Vagina (tissue), 2 donors: ENCODE measurements at regions of chr20 and their contacts with region 1.

Region 1: DNA sequence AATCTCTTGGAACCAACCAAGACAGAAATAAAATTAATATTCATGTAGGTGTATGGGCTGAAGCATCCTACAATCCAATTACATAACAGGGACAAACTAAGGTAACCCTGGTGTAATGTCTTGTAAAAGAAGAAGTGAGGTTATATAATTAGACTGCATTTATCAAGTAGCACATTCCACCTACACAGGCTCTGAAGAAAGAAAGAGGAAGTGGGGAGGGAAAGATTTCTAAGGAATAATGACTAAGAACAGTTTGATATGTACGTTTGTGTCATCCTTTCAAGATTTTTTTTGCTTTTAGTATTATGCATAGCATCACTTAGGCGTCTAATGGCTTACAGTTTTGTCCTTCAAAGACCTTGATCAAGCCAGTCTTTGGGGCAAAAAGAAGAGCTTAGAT is 139.7 kb downstream of the PLCB1 start:
- DNase-seq: no peak
- H3K4me3 ChIP-seq: no peak overlapping the region
- H3K27ac ChIP-seq: no peak overlapping the region
- H3K4me1 ChIP-seq: no peaks in the 10 kb centered on the region
- H3K27me3 ChIP-seq: no peaks in the 10 kb centered on the region
- CTCF ChIP-seq: no peak
- POLR2A ChIP-seq: no peak

Region 2: DNA sequence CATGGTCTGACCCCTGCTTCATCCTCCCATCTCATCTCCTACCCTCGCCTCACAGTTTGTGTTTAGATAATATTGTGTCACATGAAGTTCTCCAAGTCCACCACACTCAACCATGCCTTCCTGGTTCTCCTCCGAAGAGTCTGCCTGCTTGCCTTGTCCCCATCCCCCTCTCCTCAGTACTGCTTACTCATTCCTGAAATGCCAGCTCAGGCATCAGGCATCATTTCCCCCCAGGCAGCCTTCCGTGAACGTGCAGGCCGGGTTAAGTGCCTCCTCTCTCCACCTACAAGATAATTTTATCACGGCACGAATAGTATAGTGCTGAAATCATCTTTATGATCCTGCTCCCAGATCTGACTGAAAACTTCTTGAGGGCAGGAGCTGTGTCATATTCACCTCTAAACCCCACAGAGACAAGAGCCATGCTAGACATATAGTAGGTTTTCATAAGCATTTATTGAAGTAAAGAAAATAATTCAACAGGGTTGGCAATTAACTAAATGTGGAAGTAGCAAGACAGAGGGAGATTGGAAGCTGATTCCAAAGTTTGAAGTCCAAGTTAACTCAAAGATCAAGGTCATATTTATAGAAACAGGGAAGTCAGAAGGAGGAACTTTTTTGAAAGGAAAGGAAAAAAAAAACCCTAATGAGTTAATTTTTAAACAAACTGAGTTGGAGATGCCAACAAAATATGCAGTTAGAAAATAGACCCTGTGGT is 1552.9 kb before region 1 on chr20:
- intact Hi-C with region 1: no loop called
- DNase-seq: no peak
- H3K4me3 ChIP-seq: no peak overlapping the region
- H3K27ac ChIP-seq: no peak overlapping the region
- H3K4me1 ChIP-seq: no peaks in the 10 kb centered on the region
- H3K27me3 ChIP-seq: no peaks in the 10 kb centered on the region
- CTCF ChIP-seq: no peak
- POLR2A ChIP-seq: no peak

Region 3: DNA sequence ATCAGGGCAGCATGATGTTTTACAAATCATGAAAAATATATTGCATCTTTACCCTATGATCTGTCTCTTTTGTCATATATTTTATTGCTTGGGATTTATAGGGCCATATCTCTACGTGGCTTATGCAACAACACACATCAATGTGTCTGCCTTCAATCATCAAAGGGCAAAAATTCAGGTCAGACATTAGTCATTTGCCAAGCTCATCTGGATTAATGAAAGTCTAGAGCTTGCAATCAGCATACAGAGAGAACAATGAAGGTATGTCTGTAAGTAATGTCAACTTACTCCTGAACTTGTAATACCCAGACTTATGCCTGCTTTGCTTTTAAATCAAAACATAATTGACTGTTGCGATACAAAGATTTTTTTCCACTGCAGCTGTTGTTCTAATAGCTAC is 614.2 kb before region 1 on chr20:
- intact Hi-C with region 1: loop called (anchors 5 kb)
- DNase-seq: no peak
- H3K4me3 ChIP-seq: no peak overlapping the region
- H3K27ac ChIP-seq: no peak overlapping the region
- H3K4me1 ChIP-seq: no peaks in the 10 kb centered on the region
- H3K27me3 ChIP-seq: no peaks in the 10 kb centered on the region
- CTCF ChIP-seq: no peak
- POLR2A ChIP-seq: no peak

Region 4: DNA sequence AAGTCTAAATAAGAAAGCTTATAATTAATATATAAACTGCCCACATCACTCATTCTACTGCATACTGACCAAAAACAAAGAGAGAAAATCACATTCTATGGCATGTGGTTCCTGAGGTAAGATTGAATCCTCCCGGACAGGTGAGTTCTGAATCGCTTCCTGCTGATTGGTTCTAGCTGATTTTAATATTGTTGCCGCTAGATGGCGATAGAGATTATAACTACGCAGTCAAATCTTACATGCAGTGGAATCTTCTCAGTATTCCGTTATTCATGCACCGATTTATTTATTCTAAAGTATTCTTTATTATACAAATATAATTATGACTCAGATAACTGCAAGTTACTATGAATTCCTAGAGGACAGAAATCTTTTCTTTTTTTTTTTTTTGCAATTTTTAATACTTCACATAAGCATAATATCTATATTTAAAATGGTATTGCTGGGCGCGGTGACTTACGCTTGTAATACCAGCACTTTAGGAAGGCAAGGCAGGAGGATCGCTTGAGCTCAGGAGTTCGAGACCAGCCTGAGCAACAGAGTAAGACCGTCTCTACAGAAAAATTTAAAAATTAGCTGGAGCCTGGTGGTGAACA is 227.9 kb before region 1 on chr20:
- intact Hi-C with region 1: no loop called
- DNase-seq: no peak
- H3K4me3 ChIP-seq: no peak overlapping the region
- H3K27ac ChIP-seq: no peak overlapping the region
- H3K4me1 ChIP-seq: no peaks in the 10 kb centered on the region
- H3K27me3 ChIP-seq: no peaks in the 10 kb centered on the region
- CTCF ChIP-seq: peak; percentile 52 to 73 (median 57)
- POLR2A ChIP-seq: no peak

Region 5: GRCh38 chr20:8208998-8209440 is 62.7 kb before region 1 on chr20:
- intact Hi-C with region 1: no loop called
- DNase-seq: no peak
- H3K4me3 ChIP-seq: no peak overlapping the region
- H3K27ac ChIP-seq: no peak overlapping the region
- H3K4me1 ChIP-seq: no peaks in the 10 kb centered on the region
- H3K27me3 ChIP-seq: no peaks in the 10 kb centered on the region
- CTCF ChIP-seq: no peak
- POLR2A ChIP-seq: no peak

Region 6: GRCh38 chr20:8361006-8361652 is 89.4 kb after region 1 on chr20:
- intact Hi-C with region 1: no loop called
- DNase-seq: no peak
- H3K4me3 ChIP-seq: no peak overlapping the region
- H3K27ac ChIP-seq: no peak overlapping the region
- H3K4me1 ChIP-seq: no peaks in the 10 kb centered on the region
- H3K27me3 ChIP-seq: no peaks in the 10 kb centered on the region
- CTCF ChIP-seq: no peak
- POLR2A ChIP-seq: no peak